ENCODE measurements at regions of chr7 and their contacts with region 1.

Region 1: GRCh38 chr7:106659963-106660861 is 746 bp downstream of the CCDC71L start:
- DNase-seq: peak; percentile 91
- ATAC-seq: peak; percentile 47
- H3K4me3 ChIP-seq: peak overlapping the region; percentile 63 to 89 (median 79)
- H3K4me3 Mint-ChIP-seq: peak overlapping the region; percentile 87
- H3K27ac ChIP-seq: peak overlapping the region; percentile 75 to 80
- H3K27ac Mint-ChIP-seq: peak overlapping the region; percentile 91
- H3K4me1 ChIP-seq: peaks cover 23 to 24% of the 10 kb centered on the region in 2 donors
- H3K4me1 Mint-ChIP-seq: peaks cover 34% of the 10 kb centered on the region
- H3K27me3 ChIP-seq: no peaks in the 10 kb centered on the region
- H3K27me3 Mint-ChIP-seq: no peaks in the 10 kb centered on the region
- CTCF ChIP-seq: peak; percentile 81

Region 2: DNA sequence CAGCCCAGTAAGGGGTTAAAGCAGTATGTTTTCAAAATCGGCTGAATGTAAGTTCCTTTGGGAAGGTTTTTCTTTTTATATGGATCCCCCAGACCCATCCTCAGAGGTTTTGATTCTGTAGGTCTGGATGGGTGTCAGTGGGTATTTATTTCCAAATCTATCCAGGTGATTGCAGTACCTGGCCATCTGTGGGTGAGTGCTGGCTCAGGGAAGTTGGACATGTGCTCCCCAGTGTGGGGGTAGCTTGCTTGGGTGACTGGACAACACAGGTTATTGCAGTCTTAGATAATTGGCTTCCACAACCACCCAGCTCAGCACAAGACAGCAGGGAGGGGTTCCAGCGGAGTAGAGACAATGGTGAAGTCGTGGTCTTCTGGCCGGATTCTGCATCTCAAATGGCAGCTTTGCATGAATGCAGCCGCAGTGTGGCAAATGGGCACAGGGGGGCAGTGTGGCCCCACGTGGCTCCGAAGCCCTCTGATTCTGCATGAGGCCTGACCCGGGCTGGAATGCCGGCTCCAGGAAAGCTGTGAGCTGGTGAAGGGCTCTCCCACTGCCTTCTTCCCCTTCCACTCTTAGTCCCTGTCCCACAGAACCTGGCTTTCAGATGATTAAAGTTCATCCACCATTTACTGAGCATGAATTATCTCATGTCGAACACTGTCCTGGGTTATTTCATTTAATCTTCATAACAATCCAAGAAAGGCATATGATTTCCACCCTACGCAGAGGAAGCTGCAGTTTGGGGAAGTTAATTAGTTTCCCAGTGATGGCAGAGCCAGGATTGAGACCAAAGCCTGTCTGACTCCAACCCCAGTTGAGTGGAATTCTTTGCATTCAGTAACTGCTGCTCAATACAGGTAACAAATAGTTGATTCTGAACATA is 483.6 kb before region 1 on chr7:
- CTCF ChIA-PET with region 1: interaction called, 6 read pairs
- POLR2A ChIA-PET with region 1: no interaction called
- intact Hi-C with region 1: loop called (anchors 2 kb)
- DNase-seq: peak; percentile 74
- ATAC-seq: peak; percentile 69
- H3K4me3 ChIP-seq: no peak overlapping the region
- H3K4me3 Mint-ChIP-seq: no peak overlapping the region
- H3K27ac ChIP-seq: no peak overlapping the region
- H3K27ac Mint-ChIP-seq: no peak overlapping the region
- H3K4me1 ChIP-seq: peaks cover 5 to 13% of the 10 kb centered on the region in 2 donors
- H3K4me1 Mint-ChIP-seq: peaks cover 11% of the 10 kb centered on the region
- H3K27me3 ChIP-seq: peaks cover 0 to 6% (median 5%) of the 10 kb centered on the region in 4 experiments
- H3K27me3 Mint-ChIP-seq: peaks cover 13% of the 10 kb centered on the region
- CTCF ChIP-seq: peak; percentile 96

Region 3: GRCh38 chr7:106552645-106553445 is 107.4 kb before region 1 on chr7:
- CTCF ChIA-PET with region 1: interaction called, 15 read pairs
- POLR2A ChIA-PET with region 1: no interaction called
- intact Hi-C with region 1: no loop called
- DNase-seq: peak; percentile 84
- ATAC-seq: peak; percentile 91
- H3K4me3 ChIP-seq: no peak overlapping the region
- H3K4me3 Mint-ChIP-seq: peak overlapping the region; percentile 40
- H3K27ac ChIP-seq: peak overlapping the region in 1 of 2 donors; percentile 23
- H3K27ac Mint-ChIP-seq: peak overlapping the region; percentile 73
- H3K4me1 ChIP-seq: peaks cover 18 to 20% of the 10 kb centered on the region in 2 donors
- H3K4me1 Mint-ChIP-seq: peaks cover 31% of the 10 kb centered on the region
- H3K27me3 ChIP-seq: no peaks in the 10 kb centered on the region
- H3K27me3 Mint-ChIP-seq: no peaks in the 10 kb centered on the region
- CTCF ChIP-seq: no peak

Region 4: GRCh38 chr7:106583101-106583500 is 77.1 kb before region 1 on chr7:
- CTCF ChIA-PET with region 1: no interaction called
- POLR2A ChIA-PET with region 1: no interaction called
- intact Hi-C with region 1: no loop called
- DNase-seq: no peak
- ATAC-seq: no peak
- H3K4me3 ChIP-seq: no peak overlapping the region
- H3K4me3 Mint-ChIP-seq: no peak overlapping the region
- H3K27ac ChIP-seq: no peak overlapping the region
- H3K27ac Mint-ChIP-seq: no peak overlapping the region
- H3K4me1 ChIP-seq: no peaks in the 10 kb centered on the region
- H3K4me1 Mint-ChIP-seq: no peaks in the 10 kb centered on the region
- H3K27me3 ChIP-seq: no peaks in the 10 kb centered on the region
- H3K27me3 Mint-ChIP-seq: no peaks in the 10 kb centered on the region
- CTCF ChIP-seq: no peak

Region 5: DNA sequence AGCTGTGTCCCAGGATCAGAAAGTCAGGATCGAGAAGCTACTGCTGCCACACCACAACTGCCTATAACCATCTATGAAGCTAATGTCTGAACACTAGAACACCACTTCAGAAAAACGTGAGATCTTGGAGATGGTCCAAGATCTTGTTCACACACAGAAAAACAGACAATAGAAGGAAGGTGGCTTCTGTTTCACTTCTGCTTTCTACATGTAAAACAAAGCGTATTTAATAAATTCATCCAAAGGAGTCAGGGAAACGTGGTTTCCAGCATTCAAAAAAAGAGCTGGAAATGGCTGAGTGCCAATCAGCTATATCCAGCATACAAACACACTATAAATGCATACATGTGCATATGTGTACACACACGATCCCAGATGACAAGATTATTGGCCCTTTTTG is 71.0 kb after region 1 on chr7:
- CTCF ChIA-PET with region 1: interaction called, 290 read pairs
- POLR2A ChIA-PET with region 1: interaction called, 25 read pairs
- intact Hi-C with region 1: loop called (anchors 1 kb)
- DNase-seq: peak; percentile 76
- ATAC-seq: peak; percentile 83
- H3K4me3 ChIP-seq: peak overlapping the region in 1 of 5 experiments; percentile 26
- H3K4me3 Mint-ChIP-seq: peak overlapping the region; percentile 64
- H3K27ac ChIP-seq: peak overlapping the region; percentile 8 to 10
- H3K27ac Mint-ChIP-seq: peak overlapping the region; percentile 64
- H3K4me1 ChIP-seq: peaks cover 26 to 28% of the 10 kb centered on the region in 2 donors
- H3K4me1 Mint-ChIP-seq: peaks cover 28% of the 10 kb centered on the region
- H3K27me3 ChIP-seq: no peaks in the 10 kb centered on the region
- H3K27me3 Mint-ChIP-seq: no peaks in the 10 kb centered on the region
- CTCF ChIP-seq: no peak

Region 6: DNA sequence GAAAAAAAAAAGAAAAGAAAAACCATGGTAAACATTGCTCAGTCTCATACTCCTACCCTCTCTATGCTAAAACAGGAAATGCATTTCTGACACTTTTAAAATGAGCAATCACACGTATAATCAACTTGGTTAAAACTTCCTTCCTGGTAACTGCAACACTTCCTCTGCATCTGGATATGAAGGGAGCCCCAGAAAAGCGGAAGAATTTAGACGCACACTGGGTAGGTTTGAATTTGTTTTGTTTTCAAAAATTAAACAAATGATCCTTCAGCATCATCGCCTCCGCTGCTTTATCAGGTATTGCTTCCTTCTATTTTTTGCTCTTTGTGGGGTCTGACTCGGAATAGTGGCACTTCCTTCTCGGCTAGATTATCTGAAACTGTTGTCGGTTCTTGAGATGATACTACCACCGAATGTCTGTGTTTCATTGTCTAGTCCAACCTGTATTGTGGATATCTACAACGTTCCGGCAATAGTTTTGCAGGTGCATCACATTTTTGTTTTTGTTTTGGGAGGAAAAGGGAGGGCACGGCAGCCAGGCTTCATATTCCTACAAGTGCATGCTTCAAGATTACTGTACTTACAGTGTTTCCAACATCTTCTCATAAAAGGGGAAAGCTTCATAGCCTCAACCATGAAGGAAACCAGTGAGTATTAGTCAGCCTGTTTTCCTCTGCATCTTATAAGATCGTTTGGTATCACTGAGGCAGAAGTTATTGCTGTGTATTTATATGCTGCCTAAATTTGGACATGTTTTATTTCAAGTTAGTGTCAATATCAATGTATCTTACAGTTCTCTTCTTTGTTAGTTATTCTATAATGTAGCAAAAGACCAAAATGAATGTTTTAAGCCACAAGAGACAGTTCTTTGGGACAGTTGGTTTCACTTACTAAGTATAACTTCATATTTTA is 205.2 kb after region 1 on chr7 and contains the start of gene PIK3CG:
- CTCF ChIA-PET with region 1: no interaction called
- POLR2A ChIA-PET with region 1: no interaction called
- intact Hi-C with region 1: loop called (anchors 2 kb)
- DNase-seq: peak; percentile 90
- ATAC-seq: peak; percentile 75
- H3K4me3 ChIP-seq: peak within 1 kb of the TSS; percentile 72 to 100 (median 81)
- H3K4me3 Mint-ChIP-seq: peak within 1 kb of the TSS; percentile 89
- H3K27ac ChIP-seq: peak within 1 kb of the TSS; percentile 92
- H3K27ac Mint-ChIP-seq: peak within 1 kb of the TSS; percentile 86
- H3K4me1 ChIP-seq: peaks cover 49 to 57% of the 10 kb centered on the region in 2 donors
- H3K4me1 Mint-ChIP-seq: peaks cover 77% of the 10 kb centered on the region
- H3K27me3 ChIP-seq: no peaks in the 10 kb centered on the region
- H3K27me3 Mint-ChIP-seq: no peaks in the 10 kb centered on the region
- CTCF ChIP-seq: no peak
- total RNA-seq, gene PIK3CG: 44.8 and 46.9 TPM in 2 replicates

Region 7: DNA sequence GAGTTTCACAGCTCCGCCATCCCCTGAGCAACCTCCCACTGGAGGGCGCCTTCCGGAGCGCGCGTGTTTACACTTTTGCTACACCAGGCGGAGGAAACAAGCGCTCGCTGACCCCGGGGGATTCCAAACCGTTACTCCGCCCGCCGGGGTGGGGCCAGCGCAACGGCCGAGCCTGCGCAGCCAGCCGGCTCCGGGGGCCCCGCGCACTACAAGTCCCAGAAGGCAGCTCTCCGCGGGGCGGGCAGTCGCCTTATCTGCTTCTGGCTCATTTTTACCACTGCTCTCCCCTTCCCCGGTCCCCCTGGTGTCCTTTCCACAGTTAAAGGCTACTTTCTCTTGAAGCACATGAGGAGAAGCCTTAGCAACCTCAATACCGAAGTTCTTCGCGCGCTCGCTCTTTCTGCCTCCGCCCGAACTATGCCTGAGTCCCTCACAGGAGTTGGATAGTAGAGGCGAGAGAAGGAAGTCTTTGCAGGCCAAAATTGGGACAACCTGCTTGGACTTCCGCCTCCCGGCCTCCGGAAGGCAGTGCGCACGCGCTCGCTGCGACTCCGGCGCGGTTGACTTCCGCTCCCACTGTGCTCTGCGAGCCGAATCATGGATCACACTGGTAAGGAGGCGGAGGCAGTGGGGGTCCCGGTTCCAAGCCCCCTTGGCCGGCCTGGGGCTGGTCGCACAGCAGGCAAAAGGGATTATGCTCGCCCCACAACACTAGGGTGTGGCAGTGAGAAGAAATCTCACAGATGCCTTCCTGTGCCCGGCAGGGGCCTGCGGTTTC is 1083.5 kb after region 1 on chr7 and contains the start of gene CBLL1:
- CTCF ChIA-PET with region 1: no interaction called
- POLR2A ChIA-PET with region 1: interaction called, 3 read pairs
- intact Hi-C with region 1: loop called (anchors 5 kb)
- DNase-seq: peak; percentile 97
- ATAC-seq: peak; percentile 89
- H3K4me3 ChIP-seq: peak within 1 kb of the TSS; percentile 66 to 90 (median 89)
- H3K4me3 Mint-ChIP-seq: peak within 1 kb of the TSS; percentile 99
- H3K27ac ChIP-seq: peak within 1 kb of the TSS; percentile 97
- H3K27ac Mint-ChIP-seq: peak within 1 kb of the TSS; percentile 100
- H3K4me1 ChIP-seq: peaks cover 26 to 30% of the 10 kb centered on the region in 2 donors
- H3K4me1 Mint-ChIP-seq: peaks cover 45% of the 10 kb centered on the region
- H3K27me3 ChIP-seq: no peaks in the 10 kb centered on the region
- H3K27me3 Mint-ChIP-seq: no peaks in the 10 kb centered on the region
- CTCF ChIP-seq: peak; percentile 67
- total RNA-seq, gene CBLL1: 49.9 and 57.2 TPM in 2 replicates

Measured in B cell (primary cell).